ENCODE measurements at regions of chr10 and their contacts with region 1.

Region 1: GRCh38 chr10:119073584-119073983 is 7.0 kb downstream of the EIF3A start:
- DNase-seq: no peak
- ATAC-seq: no peak

Region 2: DNA sequence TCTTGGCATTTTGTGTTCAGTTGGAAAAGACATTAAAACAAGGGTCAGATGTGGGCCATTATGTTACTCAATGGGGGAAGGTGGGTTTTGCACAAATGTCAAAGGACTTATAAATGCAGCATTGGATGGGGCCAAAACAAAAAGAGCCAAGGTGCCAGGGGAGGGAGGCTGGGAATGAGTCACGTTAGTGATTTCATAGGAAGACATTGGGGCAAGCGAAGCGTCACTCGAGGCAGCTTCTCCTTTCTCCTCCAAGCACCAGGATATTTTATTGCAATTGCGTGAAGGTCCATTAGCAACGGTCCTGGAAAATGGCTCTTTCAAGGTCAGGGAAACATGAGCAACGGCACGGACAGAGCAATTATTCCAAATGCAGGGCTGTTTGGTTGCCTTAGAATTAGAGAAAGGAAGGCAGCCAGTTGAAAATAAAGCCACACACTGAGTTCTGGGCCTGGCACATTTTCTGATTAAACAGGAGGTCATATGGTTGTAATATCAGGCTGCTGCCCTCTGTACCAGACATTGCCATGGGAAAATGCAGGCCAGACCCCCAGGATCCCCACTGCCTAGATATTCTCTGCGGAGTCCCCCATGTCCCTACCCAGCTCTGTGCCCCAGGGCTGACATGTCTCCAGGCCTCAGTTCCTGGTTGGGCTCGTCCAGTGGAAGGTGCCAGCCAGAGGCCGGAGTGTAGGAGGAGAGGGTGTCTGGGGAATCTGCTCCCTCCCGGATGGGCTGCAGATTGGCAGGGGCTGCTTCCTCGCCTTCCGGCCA is 107.3 kb before region 1 on chr10:
- intact Hi-C with region 1: no loop called
- DNase-seq: no peak
- ATAC-seq: no peak

Region 3: DNA sequence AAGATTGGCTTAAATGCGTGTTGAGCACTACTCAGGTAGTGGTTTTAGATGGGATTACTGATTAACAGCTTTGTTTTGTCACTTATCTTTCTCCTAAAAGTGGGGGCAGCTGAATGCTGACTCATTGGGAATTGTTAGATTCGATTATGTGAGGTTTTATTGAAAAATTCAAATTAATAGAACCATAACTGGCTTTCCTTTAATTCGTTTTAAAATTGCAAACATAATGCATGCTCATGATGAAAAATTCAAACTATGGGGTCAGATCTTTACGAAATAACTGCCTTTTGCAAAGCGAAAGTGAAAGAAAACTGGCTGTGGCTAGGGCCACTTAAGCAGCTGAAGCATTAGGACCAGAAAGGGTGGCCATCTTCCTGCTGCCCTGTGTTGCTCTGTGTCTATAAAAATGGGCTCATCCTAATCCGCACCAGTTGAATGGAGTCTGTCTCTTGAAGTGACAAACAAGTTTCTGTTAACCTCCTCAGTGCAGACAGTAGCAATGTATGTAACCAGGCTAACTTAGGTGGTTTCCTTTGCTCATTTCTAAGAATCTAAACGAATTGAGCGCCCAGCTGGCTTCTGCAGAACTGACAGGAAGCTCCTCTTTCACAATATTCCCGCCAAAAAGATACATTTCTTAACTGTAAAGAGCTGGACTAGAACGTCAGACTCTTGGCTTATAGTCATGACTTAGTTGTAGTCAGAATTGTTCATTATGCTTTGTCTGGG is 58.1 kb after region 1 on chr10:
- intact Hi-C with region 1: loop called in 1 of 2 experiments (anchors 2 kb)
- DNase-seq: no peak
- ATAC-seq: peak; percentile 53

Measured in left colon (tissue), 2 donors.